ENCODE measurements at regions of chr1 and their contacts with region 1.

Region 1: GRCh38 chr1:16946646-16947045 is 24.9 kb downstream of the CROCC start:
- DNase-seq: no peak
- ATAC-seq: no peak
- H3K4me3 ChIP-seq: no peak overlapping the region
- H3K4me3 Mint-ChIP-seq: no peak overlapping the region
- H3K27ac ChIP-seq: no peak overlapping the region
- H3K27ac Mint-ChIP-seq: no peak overlapping the region
- H3K4me1 ChIP-seq: peaks cover 3% of the 10 kb centered on the region
- H3K4me1 Mint-ChIP-seq: peaks cover 3% of the 10 kb centered on the region
- H3K27me3 ChIP-seq: no peaks in the 10 kb centered on the region
- H3K27me3 Mint-ChIP-seq: no peaks in the 10 kb centered on the region
- CTCF ChIP-seq: no peak

Region 2: DNA sequence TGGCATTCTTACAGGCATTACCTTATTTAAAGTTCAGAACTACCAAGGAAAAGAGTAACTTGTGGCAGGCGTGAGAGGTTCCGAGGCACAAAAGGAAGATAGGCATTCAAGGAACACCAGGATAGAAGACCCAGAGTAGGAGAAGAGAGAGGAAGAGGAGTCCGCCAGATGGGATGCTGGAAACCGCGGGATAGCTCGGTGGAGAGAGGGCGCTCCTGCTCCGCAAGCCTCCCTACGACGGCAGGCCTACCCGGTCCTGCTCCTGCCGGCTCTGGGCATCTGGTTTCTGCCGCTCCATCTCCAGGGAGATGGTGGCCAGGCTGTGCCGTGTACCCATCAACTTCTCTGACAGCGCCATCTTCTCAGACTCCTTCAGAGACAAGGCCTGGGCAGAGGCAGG is 327.9 kb before region 1 on chr1:
- CTCF ChIA-PET with region 1: no interaction called
- POLR2A ChIA-PET with region 1: interaction called, 7 read pairs
- intact Hi-C with region 1: loop called in 1 of 2 experiments (anchors 1 kb)
- DNase-seq: peak in 2 of 14 experiments; percentile 38 to 45
- ATAC-seq: no peak
- H3K4me3 ChIP-seq: no peak overlapping the region
- H3K4me3 Mint-ChIP-seq: no peak overlapping the region
- H3K27ac ChIP-seq: no peak overlapping the region
- H3K27ac Mint-ChIP-seq: no peak overlapping the region
- H3K4me1 ChIP-seq: peaks cover 7% of the 10 kb centered on the region
- H3K4me1 Mint-ChIP-seq: no peaks in the 10 kb centered on the region
- H3K27me3 ChIP-seq: peaks cover under 1 to 9% of the 10 kb centered on the region in 2 experiments
- H3K27me3 Mint-ChIP-seq: no peaks in the 10 kb centered on the region
- CTCF ChIP-seq: no peak

Region 3: DNA sequence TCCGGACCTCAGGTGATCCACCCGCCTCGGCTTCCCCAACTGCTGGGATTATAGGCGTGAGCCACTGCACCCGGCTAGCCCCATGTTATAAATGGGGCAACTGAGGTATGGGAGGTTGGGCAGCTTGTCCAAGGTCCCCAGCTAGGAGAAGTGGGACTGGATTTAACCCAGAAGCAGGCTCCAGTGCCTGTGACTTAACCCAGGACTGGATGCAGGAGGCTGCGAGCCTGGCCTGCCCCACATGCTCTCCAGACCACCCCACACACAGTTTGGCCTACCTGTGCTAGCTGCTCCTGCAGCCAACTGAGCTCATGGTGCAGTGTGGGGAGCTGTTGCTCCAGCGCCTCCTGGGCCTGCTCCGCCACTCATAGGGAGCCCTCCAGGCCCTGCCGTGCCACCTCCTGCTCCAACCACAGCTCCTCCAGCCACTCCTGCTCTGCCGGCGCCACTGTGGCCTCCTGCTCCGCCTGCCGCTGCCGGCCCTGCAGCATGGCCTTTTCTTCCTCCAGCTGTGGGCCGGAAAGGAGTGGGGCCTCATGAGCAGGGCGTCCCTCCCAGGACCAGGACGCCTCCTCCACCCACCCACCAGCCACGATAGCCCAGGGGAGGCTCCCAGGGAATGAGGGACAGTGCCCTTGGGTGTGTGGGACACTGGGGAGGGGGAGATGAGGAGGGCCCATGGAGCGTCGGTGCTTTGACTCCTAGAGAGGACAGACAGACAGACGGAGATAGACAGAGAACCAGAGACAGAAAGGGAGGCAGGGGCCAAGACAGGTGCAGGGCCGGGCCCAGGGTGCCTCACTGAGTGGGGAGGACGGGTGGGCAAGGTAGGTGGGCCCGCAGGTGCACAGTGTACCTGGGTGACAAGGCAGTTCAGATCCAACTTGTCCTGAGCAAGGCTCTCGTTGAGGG is 320.9 kb before region 1 on chr1:
- CTCF ChIA-PET with region 1: no interaction called
- POLR2A ChIA-PET with region 1: interaction called, 3 read pairs
- intact Hi-C with region 1: loop called (anchors 1 to 2 kb)
- DNase-seq: peak in 3 of 14 experiments; percentile 19 to 43 (median 39)
- ATAC-seq: no peak
- H3K4me3 ChIP-seq: no peak overlapping the region
- H3K4me3 Mint-ChIP-seq: no peak overlapping the region
- H3K27ac ChIP-seq: no peak overlapping the region
- H3K27ac Mint-ChIP-seq: no peak overlapping the region
- H3K4me1 ChIP-seq: no peaks in the 10 kb centered on the region
- H3K4me1 Mint-ChIP-seq: no peaks in the 10 kb centered on the region
- H3K27me3 ChIP-seq: no peaks in the 10 kb centered on the region
- H3K27me3 Mint-ChIP-seq: no peaks in the 10 kb centered on the region
- CTCF ChIP-seq: no peak

Region 4: GRCh38 chr1:17045634-17046333 is 99.1 kb after region 1 on chr1:
- CTCF ChIA-PET with region 1: interaction called, 7 read pairs
- POLR2A ChIA-PET with region 1: no interaction called
- intact Hi-C with region 1: loop called (anchors 1 kb)
- DNase-seq: peak in 3 of 14 experiments; percentile 50 to 58 (median 57)
- ATAC-seq: peak; percentile 44
- H3K4me3 ChIP-seq: no peak overlapping the region
- H3K4me3 Mint-ChIP-seq: peak overlapping the region; percentile 47
- H3K27ac ChIP-seq: no peak overlapping the region
- H3K27ac Mint-ChIP-seq: peak overlapping the region; percentile 31
- H3K4me1 ChIP-seq: peaks cover 3% of the 10 kb centered on the region
- H3K4me1 Mint-ChIP-seq: peaks cover 19% of the 10 kb centered on the region
- H3K27me3 ChIP-seq: no peaks in the 10 kb centered on the region
- H3K27me3 Mint-ChIP-seq: no peaks in the 10 kb centered on the region
- CTCF ChIP-seq: peak; percentile 72